ENCODE measurements at regions of chr11 and their contacts with region 1.

Region 1: DNA sequence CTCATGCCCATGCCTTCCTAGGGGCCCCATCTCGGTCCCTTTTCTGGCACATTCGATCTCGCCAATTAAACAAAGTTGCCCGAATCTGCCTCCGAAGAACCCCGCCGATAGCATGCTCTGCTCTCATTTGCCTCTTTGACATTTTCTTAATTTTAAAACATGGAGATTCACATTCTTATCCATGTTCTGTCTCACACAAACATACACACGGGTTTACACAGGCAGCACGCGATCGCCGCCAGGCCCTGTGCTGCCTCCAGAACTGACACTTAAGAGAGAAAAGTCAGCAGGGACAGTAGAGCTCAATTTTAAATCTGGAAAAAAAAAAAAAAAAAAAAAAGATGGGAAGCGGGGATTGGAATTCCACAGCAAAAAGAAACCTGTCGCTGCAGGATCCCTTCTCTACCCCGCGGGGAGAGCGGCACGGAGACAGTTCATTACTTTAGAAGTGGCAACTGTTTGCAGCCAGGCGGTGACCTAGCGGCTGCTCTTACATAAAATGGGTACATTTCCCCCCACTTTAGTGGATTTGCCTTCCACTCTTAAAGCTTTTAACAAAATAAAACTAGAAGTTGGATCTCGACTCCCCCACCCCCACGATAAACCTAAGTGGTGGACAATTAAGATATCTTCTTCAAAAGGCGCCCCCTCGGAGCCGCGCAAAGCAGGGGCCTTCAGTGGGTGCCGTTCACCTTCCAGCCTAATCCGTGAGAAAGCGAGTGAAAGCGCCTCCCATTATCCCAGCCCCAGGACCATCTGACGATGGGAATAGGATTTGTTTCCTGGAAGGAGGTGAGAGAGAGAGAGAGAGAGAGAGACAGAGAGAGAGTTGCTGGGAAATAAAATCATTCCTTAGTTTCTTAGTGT is 13.7 kb downstream of the PAX6 start:
- DNase-seq: no peak
- H3K4me3 ChIP-seq: no peak overlapping the region
- H3K27ac ChIP-seq: no peak overlapping the region
- H3K4me1 ChIP-seq: no peaks in the 10 kb centered on the region
- H3K27me3 ChIP-seq: peaks cover 51% of the 10 kb centered on the region
- CTCF ChIP-seq: no peak

Region 2: GRCh38 chr11:31764766-31765165 is 32.7 kb before region 1 on chr11:
- CTCF ChIA-PET with region 1: no interaction called
- POLR2A ChIA-PET with region 1: interaction called, 15 read pairs
- intact Hi-C with region 1: no loop called
- DNase-seq: peak; percentile 93
- H3K4me3 ChIP-seq: no peak overlapping the region
- H3K27ac ChIP-seq: no peak overlapping the region
- H3K4me1 ChIP-seq: peaks cover 45% of the 10 kb centered on the region
- H3K27me3 ChIP-seq: no peaks in the 10 kb centered on the region
- CTCF ChIP-seq: no peak

Region 3: DNA sequence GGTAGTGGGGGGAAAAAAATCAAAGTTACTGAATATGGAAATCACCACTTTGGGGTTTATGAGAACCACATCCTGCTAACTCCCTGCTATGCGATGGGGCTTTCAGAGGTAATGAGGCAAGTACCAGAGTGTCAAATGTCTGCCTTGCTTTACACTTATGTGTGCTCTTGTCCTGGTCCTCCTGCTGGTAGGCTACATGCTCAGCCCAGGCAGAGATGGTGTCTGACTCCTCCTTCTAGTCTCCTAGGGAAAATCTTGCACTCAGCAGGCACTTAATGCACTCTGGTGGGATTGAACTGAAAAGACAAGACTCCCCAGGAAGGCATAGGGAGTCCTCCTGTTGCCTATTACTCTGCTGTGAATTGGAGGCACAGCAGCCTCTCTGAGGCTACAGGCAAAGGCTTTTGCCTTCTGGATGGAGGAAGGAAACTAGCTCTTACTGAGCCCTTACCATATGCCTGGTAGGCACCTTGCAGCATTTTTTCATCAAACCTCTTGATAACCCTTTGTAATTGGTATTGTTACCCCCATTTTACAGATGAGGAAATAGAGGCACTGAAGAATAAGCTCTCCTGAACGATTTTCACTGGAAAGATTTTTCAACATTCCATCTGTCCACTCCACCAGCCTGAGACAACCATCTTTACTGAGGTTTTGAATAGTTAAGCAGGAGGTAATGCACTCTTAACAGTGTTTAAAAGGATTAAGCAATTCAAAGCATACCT is 145.8 kb after region 1 on chr11:
- CTCF ChIA-PET with region 1: no interaction called
- POLR2A ChIA-PET with region 1: no interaction called
- intact Hi-C with region 1: no loop called
- DNase-seq: peak; percentile 61
- H3K4me3 ChIP-seq: no peak overlapping the region
- H3K27ac ChIP-seq: no peak overlapping the region
- H3K4me1 ChIP-seq: no peaks in the 10 kb centered on the region
- H3K27me3 ChIP-seq: peaks cover 5% of the 10 kb centered on the region
- CTCF ChIP-seq: no peak

Measured in A673 (cell line).